ENCODE measurements at regions of chr12 and their contacts with region 1.

Region 1: GRCh38 chr12:111570084-111570961 is 28.8 kb downstream of the ATXN2 start:
- DNase-seq: no peak
- ATAC-seq: no peak
- H3K4me3 ChIP-seq: no peak overlapping the region
- H3K4me3 Mint-ChIP-seq: no peak overlapping the region
- H3K27ac ChIP-seq: no peak overlapping the region
- H3K27ac Mint-ChIP-seq: no peak overlapping the region
- H3K4me1 ChIP-seq: no peaks in the 10 kb centered on the region
- H3K4me1 Mint-ChIP-seq: peaks cover 26 to 33% (median 29%) of the 10 kb centered on the region in 3 donors
- H3K27me3 ChIP-seq: no peaks in the 10 kb centered on the region
- H3K27me3 Mint-ChIP-seq: no peaks in the 10 kb centered on the region

Region 2: GRCh38 chr12:111616177-111616623 is 45.9 kb after region 1 on chr12:
- CTCF ChIA-PET with region 1: no interaction called
- POLR2A ChIA-PET with region 1: interaction called in 1 of 2 experiments, 14 read pairs
- DNase-seq: no peak
- ATAC-seq: no peak
- H3K4me3 ChIP-seq: no peak overlapping the region
- H3K4me3 Mint-ChIP-seq: no peak overlapping the region
- H3K27ac ChIP-seq: no peak overlapping the region
- H3K27ac Mint-ChIP-seq: no peak overlapping the region
- H3K4me1 ChIP-seq: no peaks in the 10 kb centered on the region
- H3K4me1 Mint-ChIP-seq: no peaks in the 10 kb centered on the region
- H3K27me3 ChIP-seq: no peaks in the 10 kb centered on the region
- H3K27me3 Mint-ChIP-seq: no peaks in the 10 kb centered on the region

Measured in T-cell (primary cell).